HCT116 (cell line): ENCODE measurements at regions of chr5 and their contacts with region 1.

Region 1: GRCh38 chr5:153974131-153974812 is 64.4 kb downstream of the FAM114A2 start:
- DNase-seq: peak; percentile 18
- ATAC-seq: peak; percentile 86
- H3K4me3 ChIP-seq: no peak overlapping the region
- H3K27ac ChIP-seq: no peak overlapping the region
- H3K4me1 ChIP-seq: no peaks in the 10 kb centered on the region
- H3K27me3 ChIP-seq: 0 out of 2 replicates have a peak, but pooled peaks cover 3% of the 10 kb centered on the region
- CTCF ChIP-seq: peak; percentile 74 to 85 (median 85)
- POLR2A ChIP-seq: no peak
- RAD21 ChIP-seq: peak; percentile 94

Region 2: DNA sequence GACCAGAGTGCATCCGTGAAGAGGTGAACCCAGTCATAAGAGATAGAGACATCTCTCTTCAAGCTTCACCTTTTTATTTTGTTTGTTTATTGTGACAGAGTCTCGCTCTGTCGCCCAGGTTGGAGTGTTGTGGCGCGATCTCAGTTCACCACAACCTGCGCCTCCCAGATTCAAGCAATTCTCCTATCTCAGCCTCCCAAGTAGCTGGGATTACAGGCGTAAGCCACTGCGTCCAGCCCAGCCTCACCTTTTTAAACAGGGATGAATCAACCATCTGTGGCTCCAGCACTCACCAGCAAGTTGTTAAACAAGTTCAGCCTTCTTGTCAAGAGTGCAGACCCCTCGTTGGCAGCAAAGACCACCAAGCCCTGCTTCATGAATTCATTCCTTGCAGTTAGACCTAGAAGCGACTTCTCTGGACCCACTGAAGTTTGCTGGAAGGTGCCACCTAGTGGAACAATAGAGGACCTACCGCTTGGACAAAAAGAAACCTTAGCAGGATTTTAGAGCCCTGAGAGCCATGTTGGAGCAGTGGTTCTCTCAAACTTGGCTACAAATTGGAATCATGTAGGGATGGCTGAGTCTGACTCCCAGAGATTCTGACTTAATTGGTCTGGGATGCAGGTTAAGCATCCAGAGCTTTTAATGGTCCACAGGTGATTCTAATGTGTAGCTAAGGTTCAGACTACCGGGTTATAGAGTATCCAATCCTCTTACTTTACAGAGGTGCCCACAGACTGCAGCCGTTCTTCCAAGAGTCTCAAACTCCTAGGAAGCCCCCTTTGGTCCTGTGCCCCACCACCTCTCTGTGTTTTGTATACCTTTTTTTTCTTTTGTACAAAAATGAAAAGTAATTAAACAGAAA is 205.8 kb after region 1 on chr5:
- CTCF ChIA-PET with region 1: interaction called, 12 read pairs
- POLR2A ChIA-PET with region 1: no interaction called
- RAD21 ChIA-PET with region 1: interaction called in 1 of 2 experiments, 3 read pairs
- intact Hi-C with region 1: loop called (anchors 1 kb)
- DNase-seq: peak; percentile 40
- ATAC-seq: peak; percentile 97
- H3K4me3 ChIP-seq: no peak overlapping the region
- H3K27ac ChIP-seq: no peak overlapping the region
- H3K4me1 ChIP-seq: no peaks in the 10 kb centered on the region
- H3K27me3 ChIP-seq: peaks cover 29% of the 10 kb centered on the region; the same call in 1 of the 2 replicates
- CTCF ChIP-seq: peak; percentile 76 to 80 (median 78)
- POLR2A ChIP-seq: no peak
- RAD21 ChIP-seq: peak; percentile 73

Region 3: GRCh38 chr5:154405078-154405792 is 431.0 kb after region 1 on chr5:
- CTCF ChIA-PET with region 1: interaction called, 26 read pairs
- POLR2A ChIA-PET with region 1: no interaction called
- RAD21 ChIA-PET with region 1: interaction called in 1 of 2 experiments, 3 read pairs
- intact Hi-C with region 1: loop called (anchors 1 kb)
- DNase-seq: peak; percentile 40
- ATAC-seq: peak; percentile 96
- H3K4me3 ChIP-seq: no peak overlapping the region
- H3K27ac ChIP-seq: no peak overlapping the region
- H3K4me1 ChIP-seq: peaks cover 8 to 23% of the 10 kb centered on the region in 2 experiments; a peak in 3 of 4 replicates
- H3K27me3 ChIP-seq: no peaks in the 10 kb centered on the region
- CTCF ChIP-seq: peak; percentile 77 to 85 (median 84)
- POLR2A ChIP-seq: no peak
- RAD21 ChIP-seq: peak; percentile 98

Region 4: GRCh38 chr5:154461531-154461930 is 487.3 kb after region 1 on chr5:
- CTCF ChIA-PET with region 1: no interaction called
- POLR2A ChIA-PET with region 1: no interaction called
- RAD21 ChIA-PET with region 1: no interaction called
- intact Hi-C with region 1: loop called (anchors 5 kb)
- DNase-seq: no peak
- ATAC-seq: peak; percentile 64; the same call in 1 of the 2 replicates
- H3K4me3 ChIP-seq: no peak overlapping the region
- H3K27ac ChIP-seq: no peak overlapping the region
- H3K4me1 ChIP-seq: peaks cover 4 to 5% of the 10 kb centered on the region in 2 experiments; a peak in 3 of 4 replicates
- H3K27me3 ChIP-seq: no peaks in the 10 kb centered on the region
- CTCF ChIP-seq: peak in 2 of 3 experiments; percentile 23 to 30; a peak in 3 of 6 replicates
- POLR2A ChIP-seq: no peak
- RAD21 ChIP-seq: peak; percentile 47

Region 5: DNA sequence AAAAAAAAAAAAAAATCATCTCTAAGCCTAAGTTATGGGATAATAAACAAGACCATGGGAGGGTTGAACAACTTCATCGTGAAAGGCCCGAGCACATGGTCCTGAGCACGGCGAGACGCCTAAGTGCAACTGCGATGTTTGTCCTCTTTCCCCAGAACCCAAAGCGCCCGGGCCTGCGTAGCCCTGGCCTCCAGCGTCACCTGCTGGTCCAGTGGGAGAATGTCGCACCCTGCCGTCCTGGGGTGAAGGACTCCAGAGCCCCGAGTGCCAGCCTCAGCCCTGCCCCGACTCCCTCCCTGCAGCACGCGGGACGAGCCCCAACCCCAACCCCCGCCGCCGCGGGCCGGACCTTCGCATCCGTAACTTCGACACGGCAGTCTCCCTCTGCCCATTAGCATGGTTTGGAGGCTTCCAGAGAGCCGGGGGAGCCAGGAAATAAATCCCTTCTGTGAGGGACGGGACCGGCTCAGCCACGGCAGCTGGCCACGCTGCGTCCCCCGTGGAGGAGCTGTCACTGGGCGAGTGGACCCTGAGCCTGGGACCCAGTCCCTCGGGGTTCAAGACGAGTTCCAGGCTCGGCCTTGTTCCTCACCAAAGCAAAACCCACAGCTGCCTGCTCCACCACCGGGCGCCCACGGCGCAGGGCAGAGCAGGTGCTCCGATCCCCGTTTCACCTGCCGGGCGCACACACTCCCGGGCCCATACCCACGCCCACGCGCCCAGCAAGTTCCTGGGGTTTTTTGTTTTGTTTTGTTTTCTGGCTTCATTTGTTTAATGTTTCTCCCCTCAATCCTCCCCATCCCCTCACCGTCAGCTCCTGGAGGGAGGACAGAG is 636.3 kb after region 1 on chr5:
- CTCF ChIA-PET with region 1: interaction called, 3 read pairs
- POLR2A ChIA-PET with region 1: no interaction called
- RAD21 ChIA-PET with region 1: no interaction called
- intact Hi-C with region 1: loop called (anchors 2 kb)
- DNase-seq: peak; percentile 76
- ATAC-seq: peak; percentile 99
- H3K4me3 ChIP-seq: peak overlapping the region; percentile 37 to 55
- H3K27ac ChIP-seq: no peak overlapping the region
- H3K4me1 ChIP-seq: peaks cover 3 to 18% of the 10 kb centered on the region in 2 experiments; a peak in 3 of 4 replicates
- H3K27me3 ChIP-seq: no peaks in the 10 kb centered on the region
- CTCF ChIP-seq: peak; percentile 93 to 95 (median 94)
- POLR2A ChIP-seq: no peak
- RAD21 ChIP-seq: peak; percentile 99

Region 6: GRCh38 chr5:154630410-154630809 is 656.1 kb after region 1 on chr5:
- CTCF ChIA-PET with region 1: interaction called, 13 read pairs
- POLR2A ChIA-PET with region 1: no interaction called
- RAD21 ChIA-PET with region 1: interaction called in 1 of 2 experiments, 5 read pairs
- intact Hi-C with region 1: no loop called
- DNase-seq: no peak
- ATAC-seq: no peak
- H3K4me3 ChIP-seq: no peak overlapping the region
- H3K27ac ChIP-seq: no peak overlapping the region
- H3K4me1 ChIP-seq: no peaks in the 10 kb centered on the region
- H3K27me3 ChIP-seq: no peaks in the 10 kb centered on the region
- CTCF ChIP-seq: no peak
- POLR2A ChIP-seq: no peak
- RAD21 ChIP-seq: no peak